ENCODE measurements at regions of chr3 and their contacts with region 1.

Region 1: GRCh38 chr3:115611654-115612053 is 11.7 kb upstream of the GAP43 start:
- DNase-seq: no peak
- H3K4me3 ChIP-seq: no peak overlapping the region
- H3K27ac ChIP-seq: no peak overlapping the region
- H3K4me1 ChIP-seq: no peaks in the 10 kb centered on the region
- H3K27me3 ChIP-seq: no peaks in the 10 kb centered on the region
- CTCF ChIP-seq: no peak
- EP300 ChIP-seq: no peak
- POLR2A ChIP-seq: no peak

Region 2: DNA sequence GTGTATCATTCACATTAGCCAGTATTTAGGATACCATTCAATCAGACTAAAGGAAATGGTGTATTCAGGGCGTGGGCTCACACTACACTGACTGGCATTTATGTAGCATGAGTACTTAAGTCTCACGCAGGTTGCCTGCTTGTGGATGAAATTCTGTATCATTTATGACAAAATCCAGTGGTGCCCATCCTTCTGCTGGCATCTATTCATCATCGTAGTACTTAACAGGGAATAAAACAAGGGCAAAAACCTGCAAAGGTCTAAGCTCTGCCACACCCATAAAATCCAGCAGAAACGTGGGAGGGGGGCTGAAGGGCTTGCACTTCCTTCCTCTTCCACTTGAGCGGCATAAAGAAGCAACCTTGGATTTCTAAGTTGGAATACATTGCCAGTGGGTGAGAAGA is 14.4 kb after region 1 on chr3:
- in situ Hi-C with region 1: no loop called
- intact Hi-C with region 1: loop called (anchors 1 kb)
- DNase-seq: no peak
- H3K4me3 ChIP-seq: no peak overlapping the region
- H3K27ac ChIP-seq: no peak overlapping the region
- H3K4me1 ChIP-seq: peaks cover 0 to 7% (median 2%) of the 10 kb centered on the region in 4 donors
- H3K27me3 ChIP-seq: peaks cover 44% of the 10 kb centered on the region
- CTCF ChIP-seq: no peak
- EP300 ChIP-seq: no peak
- POLR2A ChIP-seq: no peak